Activated naive CD4-positive, alpha-beta T cell treated with anti-CD3 and anti-CD28 coated beads for 36 hours (primary cell): ENCODE measurements at regions of chr12 and their contacts with region 1.

Region 1: GRCh38 chr12:92457458-92458180 is 245.2 kb upstream of the PLEKHG7 start:
- DNase-seq: no peak
- H3K4me3 Mint-ChIP-seq: no peak overlapping the region
- H3K27ac Mint-ChIP-seq: no peak overlapping the region
- H3K4me1 Mint-ChIP-seq: peaks cover 30% of the 10 kb centered on the region
- H3K27me3 Mint-ChIP-seq: no peaks in the 10 kb centered on the region

Region 2: GRCh38 chr12:92431146-92431545 is 26.5 kb before region 1 on chr12:
- CTCF ChIA-PET with region 1: no interaction called
- intact Hi-C with region 1: no loop called
- DNase-seq: peak; percentile 37
- H3K4me3 Mint-ChIP-seq: no peak overlapping the region
- H3K27ac Mint-ChIP-seq: no peak overlapping the region
- H3K4me1 Mint-ChIP-seq: peaks cover 44% of the 10 kb centered on the region
- H3K27me3 Mint-ChIP-seq: no peaks in the 10 kb centered on the region

Region 3: DNA sequence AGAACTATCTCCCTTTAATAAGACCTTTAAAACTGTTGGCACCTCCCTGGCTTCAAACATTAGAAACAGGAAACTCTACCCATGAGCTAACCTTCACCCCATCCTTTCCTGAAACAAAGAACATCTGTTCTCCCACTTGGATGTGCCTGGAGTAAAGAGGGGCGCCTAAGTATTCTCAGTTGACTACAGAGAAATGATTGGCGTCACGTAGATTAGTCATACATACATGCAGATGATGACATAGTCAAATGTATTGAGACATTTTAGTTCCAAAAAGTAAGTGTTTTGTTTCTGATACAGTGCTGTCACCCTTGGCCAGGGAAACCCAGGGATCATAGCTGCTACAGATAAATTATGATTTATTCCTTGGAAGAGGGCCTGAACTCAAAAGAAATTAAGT is 14.8 kb before region 1 on chr12:
- CTCF ChIA-PET with region 1: interaction called, 3 read pairs
- intact Hi-C with region 1: loop called (anchors 2 kb)
- DNase-seq: no peak
- H3K4me3 Mint-ChIP-seq: no peak overlapping the region
- H3K27ac Mint-ChIP-seq: no peak overlapping the region
- H3K4me1 Mint-ChIP-seq: peaks cover 58% of the 10 kb centered on the region
- H3K27me3 Mint-ChIP-seq: no peaks in the 10 kb centered on the region